ENCODE measurements at regions of chr5 and their contacts with region 1.

Region 1: DNA sequence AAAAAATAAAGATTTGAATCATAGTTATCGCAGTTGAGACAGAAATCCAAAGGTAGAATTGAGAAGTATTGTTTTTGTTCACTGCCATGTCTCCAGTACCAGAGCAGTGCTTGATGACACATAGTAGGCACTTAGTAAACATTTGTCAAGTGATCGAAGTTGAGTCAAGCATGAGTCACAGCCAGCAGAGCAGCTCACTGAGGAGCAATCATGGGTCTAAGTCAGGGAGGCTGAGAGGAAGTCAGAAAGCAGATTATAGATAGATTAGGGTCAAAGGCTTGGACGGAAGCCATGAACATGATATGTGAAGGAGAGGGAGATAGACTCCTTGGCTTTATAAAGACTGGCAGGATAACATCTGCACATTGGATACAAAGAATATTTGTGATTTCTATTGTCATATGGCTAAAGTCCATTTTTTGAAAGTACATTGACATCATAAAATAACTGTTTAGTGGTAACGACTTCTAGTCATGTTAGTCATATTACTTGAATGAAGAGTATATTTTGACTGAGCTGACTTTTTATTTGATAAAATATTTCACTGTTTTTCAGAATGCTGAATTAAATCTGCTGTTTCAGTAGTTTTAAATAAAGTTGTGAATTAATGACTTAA is 168.5 kb downstream of the RAB3C start:
- DNase-seq: peak; percentile 47
- H3K4me3 Mint-ChIP-seq: no peak overlapping the region
- H3K27ac Mint-ChIP-seq: no peak overlapping the region
- H3K4me1 Mint-ChIP-seq: no peaks in the 10 kb centered on the region
- H3K27me3 Mint-ChIP-seq: peaks cover 10% of the 10 kb centered on the region

Region 2: DNA sequence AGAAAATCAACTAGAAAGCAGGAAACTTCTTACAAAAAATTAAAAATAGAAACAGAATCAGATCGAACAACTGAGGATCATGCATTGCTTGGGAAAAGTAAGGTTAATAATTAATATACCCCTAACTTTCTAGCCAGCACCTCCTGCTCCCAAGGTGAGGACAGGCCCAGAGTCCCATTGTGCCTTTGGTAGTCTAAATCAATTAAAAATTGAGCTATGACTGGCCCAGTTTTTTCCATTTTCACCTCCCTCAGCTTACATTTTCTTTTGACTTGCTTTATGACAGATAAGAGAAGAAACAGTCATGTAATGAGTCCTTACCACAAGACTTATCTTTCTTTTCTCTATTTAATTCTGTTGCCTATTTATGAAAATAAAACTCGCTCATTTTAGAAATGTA is 13.7 kb after region 1 on chr5:
- CTCF ChIA-PET with region 1: no interaction called
- POLR2A ChIA-PET with region 1: no interaction called
- intact Hi-C with region 1: loop called (anchors 1 kb)
- DNase-seq: no peak
- H3K4me3 Mint-ChIP-seq: no peak overlapping the region
- H3K27ac Mint-ChIP-seq: no peak overlapping the region
- H3K4me1 Mint-ChIP-seq: peaks cover 29% of the 10 kb centered on the region
- H3K27me3 Mint-ChIP-seq: no peaks in the 10 kb centered on the region

Region 3: GRCh38 chr5:58775701-58776262 is 24.5 kb after region 1 on chr5:
- CTCF ChIA-PET with region 1: no interaction called
- POLR2A ChIA-PET with region 1: no interaction called
- intact Hi-C with region 1: loop called (anchors 1 kb)
- DNase-seq: peak; percentile 21
- H3K4me3 Mint-ChIP-seq: no peak overlapping the region
- H3K27ac Mint-ChIP-seq: no peak overlapping the region
- H3K4me1 Mint-ChIP-seq: peaks cover 11% of the 10 kb centered on the region
- H3K27me3 Mint-ChIP-seq: peaks cover 26% of the 10 kb centered on the region